Breast epithelium (tissue), 4 donors: ENCODE measurements at regions of chr1 and their contacts with region 1.

Region 1: DNA sequence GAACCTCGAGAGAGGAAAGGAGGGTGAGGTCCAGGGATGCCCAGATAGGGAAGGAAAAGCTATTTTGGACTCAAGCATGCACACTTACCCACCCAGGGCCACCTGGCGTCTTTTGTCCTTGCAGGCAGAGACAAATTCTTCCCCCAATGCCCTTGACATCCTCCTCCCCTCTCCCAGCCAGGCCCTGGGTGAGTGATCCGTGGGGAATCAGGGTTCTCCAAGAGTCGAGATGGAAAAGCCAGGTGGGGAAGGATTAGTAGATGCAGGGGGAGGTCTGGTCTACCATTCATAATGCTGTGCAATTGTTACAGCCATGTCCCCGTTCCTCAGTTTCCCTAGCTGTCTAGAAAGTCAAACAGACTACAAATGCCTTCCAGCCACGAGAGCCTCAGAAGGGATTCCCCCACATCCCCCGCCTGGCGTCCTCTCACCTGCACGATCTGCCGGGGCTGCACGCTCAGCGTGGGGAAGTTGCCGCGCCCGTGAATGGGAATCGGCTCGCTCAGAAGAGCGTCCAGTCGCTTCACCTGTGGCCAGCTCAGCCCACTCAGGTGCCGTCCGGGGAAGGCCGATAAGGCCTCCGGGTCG is 580 bp downstream of the TENT5B start:
- DNase-seq: no peak
- H3K4me3 ChIP-seq: peak overlapping the region; percentile 40 to 80 (median 64)
- H3K27ac ChIP-seq: peak overlapping the region; percentile 92 to 94
- H3K4me1 ChIP-seq: peaks cover 0 to 24% of the 10 kb centered on the region in 2 donors
- H3K27me3 ChIP-seq: no peaks in the 10 kb centered on the region
- CTCF ChIP-seq: no peak
- POLR2A ChIP-seq: no peak

Region 2: DNA sequence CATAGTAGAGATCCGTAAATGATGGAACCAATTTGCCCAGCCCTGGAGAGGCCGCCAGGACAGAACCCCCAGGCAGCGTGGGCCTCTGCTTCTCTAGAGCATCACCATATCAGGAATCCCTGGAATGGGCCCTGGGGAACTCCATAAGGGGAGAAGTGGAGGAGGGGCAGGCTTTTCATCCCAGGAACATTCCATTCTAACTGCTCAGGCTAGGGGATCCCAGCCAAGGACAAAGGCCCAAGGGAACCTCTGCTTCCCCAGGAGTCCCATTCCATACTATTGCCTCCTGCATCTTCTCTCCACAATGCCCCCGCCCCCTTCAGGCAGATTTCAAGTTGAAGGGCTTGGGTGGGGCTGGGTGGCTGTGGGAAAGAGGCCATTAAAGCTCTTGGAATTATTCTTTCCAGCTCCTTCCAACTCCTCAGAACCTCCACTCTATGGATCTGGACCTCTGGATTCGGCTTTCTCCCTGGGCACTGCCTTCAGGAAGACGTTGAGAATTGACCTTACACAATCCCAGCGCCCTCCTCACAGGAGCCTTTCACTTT is 12.6 kb before region 1 on chr1:
- intact Hi-C with region 1: loop called (anchors 2 kb)
- DNase-seq: peak; percentile 82 to 98
- H3K4me3 ChIP-seq: no peak overlapping the region
- H3K27ac ChIP-seq: peak overlapping the region; percentile 95
- H3K4me1 ChIP-seq: peaks cover 8 to 27% of the 10 kb centered on the region in 2 donors
- H3K27me3 ChIP-seq: peaks cover 0 to 4% of the 10 kb centered on the region in 2 donors
- CTCF ChIP-seq: no peak
- POLR2A ChIP-seq: no peak

Region 3: DNA sequence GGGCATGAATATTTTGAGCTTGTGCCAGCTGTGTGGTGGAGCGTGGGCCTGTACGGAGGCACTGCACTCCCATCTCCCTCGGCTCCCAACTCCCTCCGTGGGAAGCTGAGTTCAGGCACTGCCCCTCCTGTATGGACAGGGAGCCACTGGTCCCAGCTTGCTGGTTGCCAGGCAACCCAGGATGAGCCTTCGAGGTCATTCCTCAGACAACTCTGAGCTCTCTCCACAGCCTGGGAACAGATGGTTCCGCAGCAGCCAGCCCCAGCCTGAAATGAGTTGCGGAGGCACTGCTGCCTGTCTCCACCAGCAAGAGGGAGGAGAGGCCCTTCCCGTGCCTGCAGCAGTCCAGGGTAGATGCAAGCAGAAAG is 59.0 kb after region 1 on chr1:
- intact Hi-C with region 1: no loop called
- DNase-seq: peak in 1 of 2 donors; percentile 60
- H3K4me3 ChIP-seq: no peak overlapping the region
- H3K27ac ChIP-seq: peak overlapping the region; percentile 48 to 69
- H3K4me1 ChIP-seq: peaks cover 0 to 6% of the 10 kb centered on the region in 2 donors
- H3K27me3 ChIP-seq: no peaks in the 10 kb centered on the region
- CTCF ChIP-seq: no peak
- POLR2A ChIP-seq: no peak

Region 4: DNA sequence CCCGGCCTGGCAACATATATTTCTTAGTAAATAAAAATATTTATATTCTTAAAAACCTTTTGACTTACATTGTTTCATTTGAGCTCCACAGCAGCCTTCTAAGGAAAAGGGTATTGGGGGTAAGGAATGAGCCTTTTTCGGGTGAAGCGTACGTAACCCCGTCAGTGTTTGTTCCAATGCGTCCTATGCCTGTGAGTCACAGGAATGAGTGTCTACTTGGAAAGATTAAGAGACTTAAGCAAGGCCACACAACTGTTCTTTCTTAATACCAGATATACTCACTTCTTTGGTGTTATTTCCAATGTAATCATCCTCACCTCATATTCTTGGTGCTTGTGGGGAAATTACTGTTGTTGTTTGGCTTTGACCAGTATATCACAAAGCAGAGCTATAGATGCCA is 245.1 kb after region 1 on chr1:
- intact Hi-C with region 1: no loop called
- DNase-seq: no peak
- H3K4me3 ChIP-seq: no peak overlapping the region
- H3K27ac ChIP-seq: no peak overlapping the region
- H3K4me1 ChIP-seq: no peaks in the 10 kb centered on the region
- H3K27me3 ChIP-seq: no peaks in the 10 kb centered on the region
- CTCF ChIP-seq: no peak
- POLR2A ChIP-seq: no peak